Aorta (tissue), 5 donors: ENCODE measurements at regions of chr3 and their contacts with region 1.

Region 1: DNA sequence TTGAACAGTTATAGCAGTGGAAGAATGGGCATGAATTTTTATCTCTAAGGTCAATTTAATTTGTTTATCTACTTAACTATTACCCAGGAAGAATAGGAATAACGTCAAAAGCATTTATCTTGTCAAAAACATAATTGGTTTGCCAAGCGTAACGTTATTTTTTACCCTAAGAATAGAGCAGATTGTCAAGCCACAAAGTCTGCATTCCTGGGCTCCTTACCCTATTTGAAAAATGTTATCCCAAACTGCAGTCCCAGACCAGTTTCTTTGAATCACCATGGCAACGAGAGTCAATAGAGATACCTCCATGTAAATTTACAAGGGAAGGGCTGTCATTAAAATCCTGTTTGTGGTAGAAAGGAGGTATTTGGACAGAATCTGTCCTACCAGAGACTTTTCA is 61.1 kb downstream of the CPNE4 start:
- DNase-seq: no peak
- ATAC-seq: no peak
- H3K4me3 ChIP-seq: no peak overlapping the region
- H3K27ac ChIP-seq: peak overlapping the region in 1 of 2 donors; percentile 36
- H3K4me1 ChIP-seq: peaks cover 2 to 14% of the 10 kb centered on the region in 2 donors
- H3K27me3 ChIP-seq: no peaks in the 10 kb centered on the region

Region 2: DNA sequence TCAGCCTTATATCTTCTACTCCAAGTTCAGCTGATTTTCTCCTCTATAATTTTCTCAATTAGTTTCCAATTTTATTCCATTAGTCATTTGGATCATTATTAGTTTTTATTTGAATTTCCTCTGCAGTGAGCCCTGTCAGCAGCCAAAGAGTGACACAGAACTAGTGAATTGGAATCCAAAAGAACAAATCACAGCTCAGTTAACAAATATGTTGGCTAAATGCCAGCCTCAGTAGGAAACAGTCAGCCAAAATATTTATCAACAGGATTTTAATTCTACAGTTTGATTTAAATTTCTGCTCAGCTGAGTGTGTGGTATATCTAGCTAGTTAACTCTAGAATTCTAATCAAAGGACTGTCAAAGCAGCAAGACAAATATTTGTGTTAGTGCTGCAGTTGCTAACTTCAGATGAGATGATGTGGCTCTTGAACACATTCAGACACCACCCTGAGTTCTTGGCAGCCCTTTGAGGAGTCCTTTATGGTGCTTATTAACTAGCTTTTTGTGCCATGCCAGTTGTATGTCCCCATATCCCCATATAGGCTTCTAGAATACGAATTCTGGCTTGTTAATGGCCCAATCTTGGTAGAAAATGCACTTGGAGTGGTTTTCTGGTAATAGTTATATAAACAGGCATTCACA is 133.5 kb before region 1 on chr3:
- intact Hi-C with region 1: loop called in 1 of 2 experiments (anchors 10 kb)
- DNase-seq: no peak
- ATAC-seq: no peak
- H3K4me3 ChIP-seq: no peak overlapping the region
- H3K27ac ChIP-seq: peak overlapping the region in 1 of 2 donors; percentile 70
- H3K4me1 ChIP-seq: peaks cover 2 to 4% of the 10 kb centered on the region in 2 donors
- H3K27me3 ChIP-seq: no peaks in the 10 kb centered on the region

Region 3: DNA sequence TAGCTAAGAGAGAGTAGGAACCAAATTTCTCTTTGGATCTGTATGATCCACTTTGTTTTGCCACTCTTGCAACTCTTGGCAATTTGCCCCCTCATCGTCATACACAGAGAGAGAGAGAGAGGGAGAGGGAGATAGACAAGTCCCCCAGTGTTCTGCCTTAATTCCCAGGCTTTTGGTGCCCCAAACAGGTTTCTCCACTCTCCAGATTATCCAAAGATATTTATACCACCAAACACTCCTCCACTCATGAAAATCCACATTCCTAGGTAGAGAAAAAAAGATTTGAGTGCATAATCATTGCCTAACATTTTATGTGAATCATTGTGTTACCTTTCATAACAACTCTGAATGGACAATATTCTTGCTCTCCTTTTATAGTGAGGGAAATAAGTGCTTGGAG is 358.8 kb after region 1 on chr3:
- intact Hi-C with region 1: no loop called
- DNase-seq: no peak
- ATAC-seq: no peak
- H3K4me3 ChIP-seq: no peak overlapping the region
- H3K27ac ChIP-seq: no peak overlapping the region
- H3K4me1 ChIP-seq: no peaks in the 10 kb centered on the region
- H3K27me3 ChIP-seq: no peaks in the 10 kb centered on the region